ENCODE measurements at regions of chr1 and their contacts with region 1.

Region 1: DNA sequence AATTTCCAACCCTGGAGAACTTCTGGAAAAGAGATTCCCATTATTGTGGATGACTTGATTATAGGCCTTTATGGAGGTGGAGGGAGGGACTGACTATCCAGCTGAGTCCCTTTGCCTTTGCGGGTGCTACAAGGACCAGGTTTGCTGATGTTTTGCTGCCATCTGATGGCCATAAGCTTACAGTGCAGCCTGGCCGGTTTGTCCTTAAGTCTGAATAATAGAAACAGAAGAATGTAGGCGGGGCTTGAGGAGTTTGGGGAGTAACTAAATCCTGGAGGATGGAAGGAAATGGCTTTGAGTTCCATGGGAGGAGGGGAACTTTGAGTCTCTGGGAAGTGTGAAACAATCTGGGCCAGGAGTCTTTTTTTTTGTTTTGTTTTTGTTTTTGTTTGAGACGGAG is 55.7 kb upstream of the CD1D start:
- DNase-seq: peak; percentile 98
- H3K4me3 Mint-ChIP-seq: no peak overlapping the region
- H3K27ac Mint-ChIP-seq: no peak overlapping the region
- H3K4me1 Mint-ChIP-seq: peaks cover 14% of the 10 kb centered on the region
- H3K27me3 Mint-ChIP-seq: no peaks in the 10 kb centered on the region
- CTCF ChIP-seq: peak; percentile 98

Region 2: GRCh38 chr1:157580179-157580827 is 544.7 kb before region 1 on chr1:
- CTCF ChIA-PET with region 1: interaction called, 107 read pairs
- POLR2A ChIA-PET with region 1: interaction called, 5 read pairs
- intact Hi-C with region 1: loop called (anchors 1 kb)
- DNase-seq: peak; percentile 85
- H3K4me3 Mint-ChIP-seq: no peak overlapping the region
- H3K27ac Mint-ChIP-seq: no peak overlapping the region
- H3K4me1 Mint-ChIP-seq: no peaks in the 10 kb centered on the region
- H3K27me3 Mint-ChIP-seq: peaks cover 62% of the 10 kb centered on the region
- CTCF ChIP-seq: peak; percentile 82

Region 3: DNA sequence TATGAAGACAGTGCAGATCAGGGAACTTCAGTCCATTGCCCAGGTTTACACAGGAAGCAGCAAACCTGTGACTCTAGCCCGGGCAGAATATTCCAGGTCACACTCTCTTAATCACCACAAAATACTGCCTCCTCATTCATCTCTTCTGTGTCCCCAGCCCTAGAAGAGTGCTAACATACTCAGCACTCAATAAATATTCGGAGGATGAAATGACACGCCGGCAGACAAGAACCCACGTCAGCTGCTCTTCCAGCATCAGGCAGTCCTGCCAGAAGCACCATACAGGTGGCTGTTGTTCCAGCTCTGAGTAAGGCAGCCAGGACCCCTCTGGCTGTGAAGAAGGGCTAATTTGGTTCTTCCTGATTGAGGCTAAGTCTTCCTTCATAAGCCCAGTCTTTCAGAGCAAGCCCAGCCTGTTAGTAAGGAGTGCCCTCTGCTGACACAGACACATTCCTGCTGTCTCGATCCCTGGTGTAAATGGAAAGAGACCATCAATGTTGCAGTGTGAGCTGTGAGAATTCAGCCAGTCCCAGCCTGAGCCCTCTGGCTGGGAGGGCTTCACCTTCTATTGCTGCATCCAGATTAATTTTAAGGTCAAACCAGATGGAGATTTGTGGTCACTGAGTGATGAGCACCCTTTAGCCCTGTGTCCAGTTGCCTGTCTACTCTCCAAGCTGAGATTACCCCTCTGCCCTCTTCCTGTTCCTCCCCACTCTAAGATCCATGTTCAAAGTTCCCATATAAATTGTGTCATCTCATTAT is 176.5 kb before region 1 on chr1:
- CTCF ChIA-PET with region 1: interaction called, 35 read pairs
- POLR2A ChIA-PET with region 1: no interaction called
- intact Hi-C with region 1: no loop called
- DNase-seq: peak; percentile 65
- H3K4me3 Mint-ChIP-seq: no peak overlapping the region
- H3K27ac Mint-ChIP-seq: no peak overlapping the region
- H3K4me1 Mint-ChIP-seq: no peaks in the 10 kb centered on the region
- H3K27me3 Mint-ChIP-seq: peaks cover 84% of the 10 kb centered on the region
- CTCF ChIP-seq: peak; percentile 88

Region 4: DNA sequence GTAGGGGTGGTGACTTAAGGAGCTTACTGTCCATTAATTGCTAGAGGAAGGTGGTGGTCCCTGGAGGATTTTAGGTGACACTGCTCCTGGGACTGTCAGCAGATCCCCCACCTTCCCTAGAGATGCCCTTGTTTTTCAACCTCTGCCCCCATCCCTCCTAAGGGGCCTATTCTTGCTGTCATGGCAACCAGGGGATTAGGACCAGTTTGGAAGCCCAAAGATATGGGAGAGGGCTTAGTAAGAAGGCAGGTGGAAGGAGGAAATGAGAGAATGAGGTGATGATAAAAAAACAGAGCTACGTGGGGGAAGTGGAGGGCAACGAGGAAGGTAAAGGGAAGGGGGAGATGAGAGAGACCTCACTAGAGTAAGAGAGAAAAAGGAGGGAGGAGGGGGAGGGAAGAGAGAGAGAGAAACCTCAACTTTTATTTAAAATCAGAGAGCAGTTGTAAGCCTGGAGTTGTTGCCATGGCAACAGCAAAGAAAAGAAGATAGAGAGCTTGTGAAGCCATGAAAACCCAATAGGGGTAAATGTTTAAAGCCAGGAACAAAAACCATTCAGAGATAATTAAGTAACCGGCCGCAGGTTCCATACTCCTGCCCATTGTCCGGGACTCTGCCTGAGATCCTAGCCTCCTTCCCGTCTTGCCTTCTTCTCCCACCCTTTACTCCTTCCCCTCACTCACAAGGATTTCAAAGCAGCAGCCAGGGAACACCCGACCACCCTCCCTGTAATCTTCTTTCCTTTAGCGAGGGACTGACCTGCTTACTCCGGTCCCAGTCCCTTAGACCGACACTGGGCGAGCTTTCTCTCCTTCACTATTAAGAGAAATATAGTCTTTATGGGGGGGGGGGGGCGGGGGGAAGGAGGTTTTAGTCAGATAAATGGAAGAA is 110.9 kb before region 1 on chr1:
- CTCF ChIA-PET with region 1: interaction called, 12 read pairs
- POLR2A ChIA-PET with region 1: no interaction called
- intact Hi-C with region 1: no loop called
- DNase-seq: no peak
- H3K4me3 Mint-ChIP-seq: no peak overlapping the region
- H3K27ac Mint-ChIP-seq: peak overlapping the region; percentile 98
- H3K4me1 Mint-ChIP-seq: peaks cover 81% of the 10 kb centered on the region
- H3K27me3 Mint-ChIP-seq: no peaks in the 10 kb centered on the region
- CTCF ChIP-seq: no peak

Region 5: DNA sequence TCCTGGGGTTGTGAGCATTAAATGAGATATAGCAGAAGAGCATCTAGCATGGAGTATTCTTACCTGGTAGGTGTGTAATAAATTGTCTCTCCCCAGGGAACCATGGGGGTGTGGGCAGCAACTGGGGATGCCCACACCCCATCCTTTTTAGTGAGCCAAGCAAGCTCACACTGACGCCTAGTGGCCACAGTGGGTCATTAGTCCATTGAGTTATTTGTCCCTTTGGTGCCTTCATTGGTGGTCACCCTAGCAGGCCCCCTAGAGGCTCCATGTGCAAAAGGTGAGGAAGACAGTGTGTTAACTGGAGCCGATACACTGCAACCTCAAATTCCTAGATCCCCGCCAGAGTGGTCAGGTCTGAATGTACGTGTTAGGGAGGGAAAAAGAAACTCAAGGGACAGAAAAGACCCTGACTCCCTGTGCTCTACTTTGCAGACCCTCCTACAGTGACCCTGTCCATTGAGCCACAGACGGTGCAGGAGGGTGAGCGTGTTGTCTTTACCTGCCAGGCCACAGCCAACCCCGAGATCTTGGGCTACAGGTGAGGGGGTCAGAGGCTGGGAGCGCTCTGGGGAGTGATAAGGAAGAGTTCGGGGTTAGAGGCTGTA is 37.6 kb before region 1 on chr1:
- CTCF ChIA-PET with region 1: interaction called, 628 read pairs
- POLR2A ChIA-PET with region 1: no interaction called
- intact Hi-C with region 1: loop called (anchors 2 kb)
- DNase-seq: peak; percentile 85
- H3K4me3 Mint-ChIP-seq: no peak overlapping the region
- H3K27ac Mint-ChIP-seq: no peak overlapping the region
- H3K4me1 Mint-ChIP-seq: no peaks in the 10 kb centered on the region
- H3K27me3 Mint-ChIP-seq: no peaks in the 10 kb centered on the region
- CTCF ChIP-seq: peak; percentile 98

Region 6: GRCh38 chr1:158212320-158212719 is 87.3 kb after region 1 on chr1:
- CTCF ChIA-PET with region 1: no interaction called
- POLR2A ChIA-PET with region 1: no interaction called
- intact Hi-C with region 1: no loop called
- DNase-seq: no peak
- H3K4me3 Mint-ChIP-seq: no peak overlapping the region
- H3K27ac Mint-ChIP-seq: no peak overlapping the region
- H3K4me1 Mint-ChIP-seq: no peaks in the 10 kb centered on the region
- H3K27me3 Mint-ChIP-seq: peaks cover 50% of the 10 kb centered on the region
- CTCF ChIP-seq: no peak

Region 7: DNA sequence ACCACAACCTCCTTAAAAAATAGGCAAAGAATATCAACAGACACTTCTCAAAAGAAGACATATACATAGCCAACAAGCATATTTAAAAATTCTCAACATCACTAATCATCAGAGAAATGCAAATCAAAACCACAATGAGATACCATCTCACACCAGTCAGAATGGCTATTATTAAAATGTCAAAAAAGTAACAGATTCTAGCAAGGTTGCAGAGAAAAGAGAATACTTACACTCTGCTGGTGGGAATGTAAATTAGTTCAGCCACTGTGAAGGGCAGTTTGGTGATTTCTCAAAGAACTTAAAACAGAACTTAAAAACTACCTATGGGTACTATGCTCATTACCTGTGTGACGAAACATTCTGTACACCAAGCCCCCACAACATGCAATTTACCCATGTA is 185.6 kb after region 1 on chr1:
- CTCF ChIA-PET with region 1: no interaction called
- POLR2A ChIA-PET with region 1: no interaction called
- intact Hi-C with region 1: no loop called
- DNase-seq: no peak
- H3K4me3 Mint-ChIP-seq: no peak overlapping the region
- H3K27ac Mint-ChIP-seq: no peak overlapping the region
- H3K4me1 Mint-ChIP-seq: no peaks in the 10 kb centered on the region
- H3K27me3 Mint-ChIP-seq: peaks cover 14% of the 10 kb centered on the region
- CTCF ChIP-seq: no peak

Region 8: DNA sequence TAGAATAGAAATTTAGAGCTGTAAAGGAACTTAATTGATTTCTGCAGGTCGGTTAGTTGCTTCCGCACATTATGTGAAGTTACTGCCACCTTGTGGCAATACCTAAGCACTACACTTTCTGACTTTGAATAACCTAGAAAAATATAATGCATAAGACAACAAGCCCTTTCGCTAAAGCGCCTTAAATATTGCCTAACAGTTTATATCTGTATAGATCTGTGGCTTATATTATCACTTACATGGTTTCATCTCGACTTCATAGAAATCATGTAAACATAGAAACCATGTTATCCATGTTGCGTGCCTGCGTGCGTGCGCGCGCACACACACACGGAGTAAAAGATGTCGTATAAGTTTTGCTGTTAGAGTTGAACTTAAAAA is 873.8 kb after region 1 on chr1:
- CTCF ChIA-PET with region 1: interaction called, 5 read pairs
- POLR2A ChIA-PET with region 1: no interaction called
- intact Hi-C with region 1: loop called (anchors 1 kb)
- DNase-seq: peak; percentile 81
- H3K4me3 Mint-ChIP-seq: peak overlapping the region; percentile 65
- H3K27ac Mint-ChIP-seq: peak overlapping the region; percentile 63
- H3K4me1 Mint-ChIP-seq: peaks cover 22% of the 10 kb centered on the region
- H3K27me3 Mint-ChIP-seq: no peaks in the 10 kb centered on the region
- CTCF ChIP-seq: peak; percentile 95

Measured in MCF 10A (cell line).